ENCODE measurements at regions of chr1 and their contacts with region 1.

Region 1: DNA sequence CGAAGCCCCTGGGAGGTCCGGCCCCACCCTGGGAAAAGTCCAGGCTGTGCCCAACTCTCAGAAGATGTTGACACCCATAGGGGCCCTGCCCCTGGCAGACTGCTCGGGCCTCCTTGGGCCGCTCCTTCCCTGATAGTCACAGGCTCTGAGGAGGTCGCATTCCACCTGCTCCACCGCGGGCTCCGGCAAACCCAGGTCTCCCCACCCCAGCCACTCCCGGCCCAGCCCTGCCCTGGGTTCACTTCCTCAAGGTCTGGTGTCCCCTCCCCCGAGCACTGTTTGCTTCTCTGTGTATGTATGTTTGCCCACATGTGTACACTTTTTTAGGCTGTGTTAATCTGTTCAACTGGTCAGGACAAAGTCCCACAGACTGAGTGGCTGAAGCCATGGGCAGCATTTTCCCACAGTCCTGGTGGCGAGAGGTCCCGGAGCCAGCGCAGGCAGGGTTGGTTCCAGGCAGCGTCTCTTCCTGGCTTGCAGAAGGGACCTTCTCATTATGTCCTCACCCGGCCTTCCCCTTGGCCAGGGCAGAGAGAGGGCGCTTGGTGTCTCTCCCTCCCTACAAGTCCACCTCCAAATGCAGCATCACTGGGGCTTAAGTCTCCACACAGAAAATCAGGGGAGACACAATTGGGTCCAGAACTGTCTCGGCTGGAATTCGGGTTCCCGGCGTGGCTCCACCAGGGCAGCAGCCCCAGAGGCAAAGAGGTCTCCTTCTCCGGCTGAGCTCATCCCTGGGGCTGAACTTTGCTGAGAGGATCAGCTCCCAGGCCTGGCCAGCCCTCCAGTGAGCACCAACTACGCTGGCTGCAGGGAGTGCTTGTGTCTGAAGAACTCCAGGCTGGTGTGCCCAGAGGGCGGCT is 10.5 kb upstream of the PRXL2B start:
- DNase-seq: peak in 1 of 5 donors; percentile 43
- H3K4me3 ChIP-seq: no peak overlapping the region
- H3K4me3 Mint-ChIP-seq: peak overlapping the region in 2 of 7 donors; percentile 45 to 56
- H3K27ac ChIP-seq: no peak overlapping the region
- H3K27ac Mint-ChIP-seq: peak overlapping the region in 7 of 8 donors; percentile 50 to 84 (median 70)
- H3K4me1 ChIP-seq: peaks cover 39% of the 10 kb centered on the region
- H3K4me1 Mint-ChIP-seq: peaks cover 25 to 37% (median 29%) of the 10 kb centered on the region in 3 donors
- H3K27me3 ChIP-seq: no peaks in the 10 kb centered on the region
- H3K27me3 Mint-ChIP-seq: peaks cover 0 to 4% of the 10 kb centered on the region in 2 donors

Region 2: DNA sequence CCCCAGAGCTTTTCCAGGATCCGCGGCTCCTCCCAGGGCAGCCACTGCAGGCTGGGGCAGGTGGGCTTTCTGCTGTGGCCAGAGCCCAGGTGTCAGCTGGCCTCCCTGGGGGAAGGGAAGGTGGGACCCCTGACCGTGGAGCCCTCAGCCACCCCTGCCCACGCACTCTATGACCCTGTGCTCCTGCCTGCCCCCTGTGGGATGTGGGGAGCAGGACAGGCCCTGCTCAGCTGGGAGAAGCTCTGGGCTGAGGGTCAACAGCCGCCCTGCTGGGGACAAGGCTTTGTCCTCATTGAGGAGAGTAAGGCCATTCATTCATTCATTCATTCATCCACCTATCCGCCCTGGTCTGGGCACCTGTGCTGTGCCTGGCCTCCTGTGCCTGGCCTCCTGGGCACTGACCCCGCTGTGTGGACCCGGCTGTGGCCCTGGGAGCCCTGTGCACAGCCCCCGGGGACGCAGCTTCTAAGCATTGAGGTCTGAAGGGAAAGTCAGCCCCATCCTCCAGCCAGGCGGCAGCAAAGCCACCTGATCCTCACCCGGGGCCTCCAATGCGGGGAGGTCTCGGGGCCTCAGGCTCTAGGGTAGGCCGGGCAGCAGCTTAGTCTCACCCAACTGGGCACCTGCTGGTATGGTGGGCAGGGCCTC is 14.0 kb before region 1 on chr1:
- CTCF ChIA-PET with region 1: interaction called, 30 read pairs
- POLR2A ChIA-PET with region 1: interaction called, 4 read pairs
- DNase-seq: no peak
- H3K4me3 ChIP-seq: no peak overlapping the region
- H3K4me3 Mint-ChIP-seq: no peak overlapping the region
- H3K27ac ChIP-seq: no peak overlapping the region
- H3K27ac Mint-ChIP-seq: peak overlapping the region in 2 of 8 donors; percentile 45 to 50
- H3K4me1 ChIP-seq: peaks cover 18% of the 10 kb centered on the region
- H3K4me1 Mint-ChIP-seq: peaks cover 8 to 36% (median 12%) of the 10 kb centered on the region in 3 donors
- H3K27me3 ChIP-seq: no peaks in the 10 kb centered on the region
- H3K27me3 Mint-ChIP-seq: peaks cover 0 to 2% of the 10 kb centered on the region in 2 donors

Measured in CD8-positive, alpha-beta memory T cell (primary cell).